ENCODE measurements at regions of chr17 and their contacts with region 1.

Region 1: DNA sequence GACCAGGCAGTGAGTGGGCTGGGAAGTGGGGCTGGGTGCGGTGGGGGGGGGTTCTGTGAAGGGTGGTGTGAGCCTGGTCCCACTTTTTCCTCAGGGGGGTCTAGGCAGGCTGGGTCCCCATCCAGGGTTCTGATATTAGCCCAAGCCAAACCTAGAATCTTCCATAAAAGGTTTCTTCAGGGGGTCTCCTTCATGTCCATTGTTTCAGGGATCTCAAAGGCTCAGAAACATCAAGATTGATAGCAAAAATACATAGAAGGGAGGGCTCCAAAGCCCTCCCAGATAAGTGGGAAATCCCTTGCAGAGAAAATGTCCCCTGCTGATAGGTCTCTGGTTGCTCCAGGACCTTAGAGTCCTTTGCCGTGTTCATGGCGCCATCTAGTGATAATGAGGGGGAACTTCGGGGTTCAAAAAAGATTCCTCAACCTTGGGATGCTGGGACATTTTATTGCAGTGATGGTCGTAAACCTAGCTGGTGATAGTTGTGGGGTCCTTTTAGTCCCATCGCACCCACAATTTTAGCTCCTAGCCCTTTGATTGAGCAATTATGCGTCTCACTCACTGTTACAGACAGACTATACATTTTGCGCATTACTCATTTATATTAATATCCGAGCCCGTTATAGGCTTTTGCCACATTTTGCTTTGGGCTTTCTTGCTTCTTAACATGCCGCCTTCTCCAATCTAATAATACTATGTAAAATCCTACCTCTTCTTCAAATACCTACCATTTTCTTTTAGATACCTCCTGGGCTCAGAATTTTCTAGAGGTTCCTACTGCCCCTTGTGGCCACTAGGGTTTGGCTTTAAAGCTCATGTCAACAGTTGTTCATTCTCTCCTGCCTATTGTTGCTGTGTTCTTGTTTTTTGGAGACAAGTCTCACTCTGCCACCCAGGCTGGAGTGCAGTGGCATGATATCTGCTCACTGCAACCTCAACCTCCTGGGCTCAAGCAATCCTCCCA is 35.1 kb downstream of the IGF2BP1 start:
- DNase-seq: peak; percentile 21 to 42 (median 29)
- H3K4me3 ChIP-seq: no peak overlapping the region
- H3K4me3 Mint-ChIP-seq: no peak overlapping the region
- H3K27ac ChIP-seq: no peak overlapping the region
- H3K27ac Mint-ChIP-seq: no peak overlapping the region
- H3K4me1 ChIP-seq: no peaks in the 10 kb centered on the region
- H3K4me1 Mint-ChIP-seq: no peaks in the 10 kb centered on the region
- H3K27me3 ChIP-seq: no peaks in the 10 kb centered on the region
- H3K27me3 Mint-ChIP-seq: peaks cover 10 to 23% (median 12%) of the 10 kb centered on the region in 3 donors
- CTCF ChIP-seq: peak; percentile 82

Region 2: GRCh38 chr17:48678141-48678971 is 353.9 kb before region 1 on chr17:
- intact Hi-C with region 1: loop called in 1 of 2 experiments (anchors 10 kb)
- DNase-seq: peak; percentile 32 to 49 (median 36)
- H3K4me3 ChIP-seq: no peak overlapping the region
- H3K4me3 Mint-ChIP-seq: peak overlapping the region in 1 of 2 donors; percentile 56
- H3K27ac ChIP-seq: no peak overlapping the region
- H3K27ac Mint-ChIP-seq: peak overlapping the region in 1 of 7 donors; percentile 54
- H3K4me1 ChIP-seq: peaks cover 0 to 3% of the 10 kb centered on the region in 2 donors
- H3K4me1 Mint-ChIP-seq: peaks cover 2% of the 10 kb centered on the region
- H3K27me3 ChIP-seq: peaks cover 19 to 58% of the 10 kb centered on the region in 2 donors
- H3K27me3 Mint-ChIP-seq: peaks cover 37 to 76% (median 48%) of the 10 kb centered on the region in 3 donors
- CTCF ChIP-seq: peak; percentile 98

Region 3: DNA sequence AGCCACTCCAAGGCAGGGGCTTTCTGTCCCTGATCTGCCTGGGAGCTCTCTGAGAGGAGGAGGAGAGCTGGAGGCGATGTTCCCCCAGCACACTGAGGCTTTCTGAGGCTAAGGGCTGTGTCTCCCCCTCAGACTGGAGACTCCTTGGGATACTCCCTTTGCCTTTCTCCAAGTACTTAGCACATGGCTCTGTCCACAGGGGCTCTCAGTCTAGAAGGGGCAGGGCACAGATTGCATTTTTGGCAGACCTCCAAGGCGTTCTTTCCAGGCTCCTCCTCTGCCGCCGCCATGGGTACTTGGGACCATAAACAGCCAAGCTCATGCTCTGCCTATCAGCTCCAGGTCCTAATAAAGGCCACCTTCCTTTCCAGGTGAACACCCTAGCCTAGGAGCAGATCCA is 62.0 kb before region 1 on chr17:
- intact Hi-C with region 1: no loop called
- DNase-seq: no peak
- H3K4me3 ChIP-seq: no peak overlapping the region
- H3K4me3 Mint-ChIP-seq: no peak overlapping the region
- H3K27ac ChIP-seq: no peak overlapping the region
- H3K27ac Mint-ChIP-seq: no peak overlapping the region
- H3K4me1 ChIP-seq: no peaks in the 10 kb centered on the region
- H3K4me1 Mint-ChIP-seq: peaks cover 2% of the 10 kb centered on the region
- H3K27me3 ChIP-seq: peaks cover 3 to 10% of the 10 kb centered on the region in 2 donors
- H3K27me3 Mint-ChIP-seq: peaks cover 24 to 58% (median 42%) of the 10 kb centered on the region in 3 donors
- CTCF ChIP-seq: no peak

Region 4: GRCh38 chr17:49101054-49101947 is 69.1 kb after region 1 on chr17:
- intact Hi-C with region 1: no loop called
- DNase-seq: no peak
- H3K4me3 ChIP-seq: no peak overlapping the region
- H3K4me3 Mint-ChIP-seq: no peak overlapping the region
- H3K27ac ChIP-seq: no peak overlapping the region
- H3K27ac Mint-ChIP-seq: no peak overlapping the region
- H3K4me1 ChIP-seq: no peaks in the 10 kb centered on the region
- H3K4me1 Mint-ChIP-seq: no peaks in the 10 kb centered on the region
- H3K27me3 ChIP-seq: no peaks in the 10 kb centered on the region
- H3K27me3 Mint-ChIP-seq: peaks cover 0 to 10% (median 7%) of the 10 kb centered on the region in 3 donors
- CTCF ChIP-seq: no peak

Measured in CD14-positive monocyte (primary cell).